AG04450 (cell line): ENCODE measurements at regions of chr3 and their contacts with region 1.

Region 1: DNA sequence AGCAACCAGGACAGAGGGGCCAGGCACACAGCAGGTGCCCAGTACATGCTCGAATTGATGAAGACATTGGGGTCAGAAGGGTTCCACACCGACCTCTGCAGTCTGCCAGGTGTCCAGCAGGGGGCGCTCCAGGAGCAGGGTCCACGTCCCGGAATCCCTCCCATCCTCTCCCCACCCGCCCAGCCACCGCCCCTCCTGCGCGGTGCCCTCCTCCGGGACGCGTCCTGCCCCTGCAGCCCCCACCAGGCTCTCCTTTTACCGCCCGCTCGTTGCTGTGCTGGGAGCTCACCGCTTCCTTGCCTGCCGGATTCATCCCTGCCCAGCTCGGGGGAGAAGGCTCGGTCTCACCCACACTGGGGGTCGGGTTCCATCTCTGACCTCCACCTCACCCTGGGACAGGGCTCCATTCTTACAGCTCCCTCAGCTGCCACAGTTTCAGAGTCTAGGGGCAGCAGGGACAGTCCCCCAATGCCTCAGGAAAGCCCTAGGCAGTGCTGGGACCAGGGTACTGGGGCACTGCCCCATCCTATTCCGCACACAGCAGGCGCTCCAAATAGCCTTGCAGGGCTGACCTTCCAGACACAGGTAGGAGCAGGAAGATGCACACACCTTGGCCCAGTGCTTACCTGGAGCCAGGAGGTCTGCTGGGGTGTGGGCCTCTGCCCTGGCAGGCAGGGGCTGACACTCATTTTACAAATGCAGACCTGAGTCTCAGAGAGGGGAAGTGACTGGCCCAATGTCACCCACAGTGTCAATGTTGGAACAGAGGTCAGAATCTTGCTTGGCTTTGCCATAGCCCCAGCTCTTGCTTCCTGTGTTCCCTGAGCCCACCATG is 31.0 kb downstream of the GRIP2 start:
- DNase-seq: no peak
- H3K4me3 ChIP-seq: no peak overlapping the region
- H3K27ac ChIP-seq: no peak overlapping the region
- H3K27me3 ChIP-seq: peaks cover 10% of the 10 kb centered on the region
- CTCF ChIP-seq: peak; percentile 84

Region 2: DNA sequence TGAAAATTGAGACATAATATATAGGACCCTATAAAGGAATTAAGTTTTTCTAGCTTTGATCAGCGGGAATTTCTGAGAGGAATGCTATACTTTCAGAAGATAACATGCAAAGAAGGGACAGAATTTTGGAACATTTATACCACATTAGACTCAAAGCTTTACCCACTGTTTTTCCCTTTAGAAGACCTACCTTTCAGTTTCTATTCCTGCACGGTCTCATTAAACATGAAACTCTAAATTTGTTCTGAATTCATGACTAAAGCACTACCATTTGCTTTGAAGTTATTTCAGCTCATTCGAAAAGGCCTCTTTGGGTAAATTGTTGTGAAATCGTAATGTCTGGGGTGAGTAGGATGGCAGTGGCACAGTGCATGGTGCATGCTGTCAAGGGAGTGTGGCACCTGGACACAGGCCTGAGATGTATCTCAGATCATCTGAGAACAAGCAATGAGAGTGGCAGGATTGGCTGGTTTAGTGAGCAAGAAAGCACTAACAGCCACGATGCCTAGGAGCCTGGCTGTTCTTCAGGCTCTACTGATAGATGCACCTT is 427.0 kb before region 1 on chr3:
- CTCF ChIA-PET with region 1: interaction called, 11 read pairs
- POLR2A ChIA-PET with region 1: no interaction called
- DNase-seq: no peak
- H3K4me3 ChIP-seq: no peak overlapping the region
- H3K27ac ChIP-seq: no peak overlapping the region
- H3K27me3 ChIP-seq: no peaks in the 10 kb centered on the region
- CTCF ChIP-seq: no peak

Region 3: DNA sequence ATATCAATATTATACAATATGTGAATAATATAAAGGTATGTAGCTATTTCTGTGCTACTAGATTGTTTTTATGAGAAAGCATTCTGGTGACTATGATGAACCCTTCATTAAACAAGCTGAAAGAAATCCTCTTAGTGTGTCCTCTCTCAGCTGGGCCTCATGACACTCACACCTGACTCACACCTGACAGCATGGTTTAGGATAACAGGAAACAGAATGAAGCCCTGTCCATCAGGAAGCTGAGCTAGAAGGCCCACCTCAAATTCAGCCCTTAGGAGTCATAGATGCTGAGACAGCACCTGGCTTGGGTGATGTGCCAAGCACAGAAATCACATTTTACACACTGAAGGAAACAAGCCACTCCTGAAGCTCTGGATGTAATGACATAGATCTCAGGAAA is 415.3 kb before region 1 on chr3:
- CTCF ChIA-PET with region 1: no interaction called
- POLR2A ChIA-PET with region 1: no interaction called
- DNase-seq: no peak
- H3K4me3 ChIP-seq: no peak overlapping the region
- H3K27ac ChIP-seq: no peak overlapping the region
- H3K27me3 ChIP-seq: peaks cover 8% of the 10 kb centered on the region
- CTCF ChIP-seq: no peak

Region 4: GRCh38 chr3:14261229-14261628 is 247.9 kb before region 1 on chr3:
- CTCF ChIA-PET with region 1: interaction called, 10 read pairs
- POLR2A ChIA-PET with region 1: no interaction called
- DNase-seq: peak; percentile 48
- H3K4me3 ChIP-seq: no peak overlapping the region
- H3K27ac ChIP-seq: no peak overlapping the region
- H3K27me3 ChIP-seq: no peaks in the 10 kb centered on the region
- CTCF ChIP-seq: peak; percentile 99

Region 5: DNA sequence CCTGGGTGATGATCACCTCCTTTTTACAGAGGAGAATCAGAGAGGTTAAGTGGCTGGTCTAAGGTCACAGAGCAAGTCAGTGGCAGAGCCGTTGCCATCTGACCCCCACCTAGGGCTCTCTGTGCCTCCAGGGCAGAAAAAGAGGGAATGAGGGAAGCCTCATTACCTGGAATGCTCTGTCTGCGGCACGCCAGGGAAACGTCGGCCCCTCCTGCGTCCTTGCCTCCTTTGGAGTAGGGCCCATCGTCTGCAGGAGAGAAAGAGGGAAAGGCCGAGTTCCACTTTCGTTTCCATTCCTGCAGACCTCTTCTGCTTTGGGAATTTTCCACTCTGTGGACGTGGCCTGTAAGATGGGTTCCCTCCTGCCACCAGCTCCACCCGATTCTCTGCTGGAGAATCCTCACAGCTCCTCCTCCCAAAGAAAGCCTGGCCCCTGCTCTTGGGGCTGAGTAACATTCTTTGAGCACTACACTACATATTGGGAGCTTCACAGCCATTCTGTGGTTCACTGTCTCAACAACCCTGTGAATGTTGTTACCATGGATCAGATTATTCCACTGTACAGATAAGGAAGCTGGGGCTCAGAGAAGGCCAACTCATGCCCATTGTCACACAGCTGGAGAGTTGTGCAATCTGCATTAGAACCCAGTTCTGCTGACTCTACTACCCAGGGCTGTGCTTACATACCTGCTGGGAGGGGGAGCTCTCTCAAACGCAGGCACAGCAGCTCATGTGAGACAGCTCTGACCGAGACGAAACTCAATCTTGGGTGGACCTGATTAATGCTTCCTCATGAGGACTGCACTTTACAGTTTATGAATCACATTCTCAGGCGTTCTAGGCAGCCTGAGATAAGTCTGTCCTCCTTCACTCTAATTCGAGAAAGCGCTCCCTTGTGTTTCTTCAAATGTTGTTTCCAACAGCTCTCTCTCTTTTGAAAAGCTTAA is 16.8 kb after region 1 on chr3:
- CTCF ChIA-PET with region 1: interaction called, 68 read pairs
- POLR2A ChIA-PET with region 1: no interaction called
- DNase-seq: no peak
- H3K4me3 ChIP-seq: no peak overlapping the region
- H3K27ac ChIP-seq: no peak overlapping the region
- H3K27me3 ChIP-seq: peaks cover 21% of the 10 kb centered on the region
- CTCF ChIP-seq: no peak

Region 6: DNA sequence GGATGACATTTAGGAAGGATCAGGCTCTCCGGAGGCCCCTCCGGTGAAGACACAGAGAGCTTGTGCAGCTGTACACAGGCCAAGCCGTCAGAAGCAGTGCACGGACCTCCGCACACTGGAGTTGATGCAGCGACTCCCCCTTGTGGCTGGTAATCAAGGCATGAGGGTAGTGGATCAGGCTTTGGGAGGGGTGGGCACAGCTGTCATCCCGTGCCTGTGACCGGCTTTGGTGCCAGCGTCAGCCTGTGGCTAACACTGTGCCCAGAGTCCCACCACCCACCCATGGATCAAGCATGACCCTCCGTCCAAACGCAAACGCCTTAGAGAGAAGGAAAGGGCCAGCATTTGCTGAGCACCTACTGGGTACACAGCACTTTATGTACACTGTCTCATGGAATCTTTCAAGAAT is 39.1 kb after region 1 on chr3:
- CTCF ChIA-PET with region 1: interaction called, 33 read pairs
- POLR2A ChIA-PET with region 1: no interaction called
- DNase-seq: peak; percentile 33
- H3K4me3 ChIP-seq: no peak overlapping the region
- H3K27ac ChIP-seq: no peak overlapping the region
- H3K27me3 ChIP-seq: peaks cover 11% of the 10 kb centered on the region
- CTCF ChIP-seq: peak; percentile 80

Region 7: GRCh38 chr3:14626881-14627411 is 117.8 kb after region 1 on chr3:
- CTCF ChIA-PET with region 1: no interaction called
- POLR2A ChIA-PET with region 1: no interaction called
- DNase-seq: peak; percentile 37
- H3K4me3 ChIP-seq: no peak overlapping the region
- H3K27ac ChIP-seq: peak overlapping the region; percentile 47
- H3K27me3 ChIP-seq: no peaks in the 10 kb centered on the region
- CTCF ChIP-seq: no peak

Region 8: DNA sequence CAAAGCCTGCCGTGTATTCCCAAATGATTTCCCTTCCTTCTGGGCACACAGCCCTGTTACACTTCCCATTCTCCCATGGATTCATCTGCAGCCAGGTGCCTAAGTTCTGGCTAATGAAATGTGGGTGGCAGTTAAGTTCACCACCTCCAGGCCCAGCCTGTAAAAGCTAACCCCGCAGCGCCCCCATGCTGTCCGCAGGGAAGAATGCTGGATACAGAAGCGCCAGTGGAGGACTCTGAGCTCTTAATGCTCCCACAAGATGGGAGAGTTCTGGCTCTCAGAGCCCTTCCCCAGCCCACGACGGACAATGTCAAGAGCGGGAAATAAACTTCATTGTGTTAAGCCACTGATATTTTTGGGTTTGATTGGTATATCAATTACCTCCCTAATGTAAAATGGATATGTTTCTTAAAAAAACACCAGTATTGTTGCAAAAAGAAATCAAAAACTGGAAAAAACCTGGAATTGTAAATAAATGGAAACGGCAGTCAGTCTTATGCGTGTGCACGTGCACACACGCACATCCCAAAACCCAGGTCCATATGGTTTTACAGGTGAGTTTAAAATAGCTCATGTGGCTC is 271.8 kb after region 1 on chr3:
- CTCF ChIA-PET with region 1: interaction called, 13 read pairs
- POLR2A ChIA-PET with region 1: no interaction called
- DNase-seq: peak; percentile 3
- H3K4me3 ChIP-seq: no peak overlapping the region
- H3K27ac ChIP-seq: no peak overlapping the region
- H3K27me3 ChIP-seq: peaks cover 2% of the 10 kb centered on the region
- CTCF ChIP-seq: peak; percentile 56

Region 9: DNA sequence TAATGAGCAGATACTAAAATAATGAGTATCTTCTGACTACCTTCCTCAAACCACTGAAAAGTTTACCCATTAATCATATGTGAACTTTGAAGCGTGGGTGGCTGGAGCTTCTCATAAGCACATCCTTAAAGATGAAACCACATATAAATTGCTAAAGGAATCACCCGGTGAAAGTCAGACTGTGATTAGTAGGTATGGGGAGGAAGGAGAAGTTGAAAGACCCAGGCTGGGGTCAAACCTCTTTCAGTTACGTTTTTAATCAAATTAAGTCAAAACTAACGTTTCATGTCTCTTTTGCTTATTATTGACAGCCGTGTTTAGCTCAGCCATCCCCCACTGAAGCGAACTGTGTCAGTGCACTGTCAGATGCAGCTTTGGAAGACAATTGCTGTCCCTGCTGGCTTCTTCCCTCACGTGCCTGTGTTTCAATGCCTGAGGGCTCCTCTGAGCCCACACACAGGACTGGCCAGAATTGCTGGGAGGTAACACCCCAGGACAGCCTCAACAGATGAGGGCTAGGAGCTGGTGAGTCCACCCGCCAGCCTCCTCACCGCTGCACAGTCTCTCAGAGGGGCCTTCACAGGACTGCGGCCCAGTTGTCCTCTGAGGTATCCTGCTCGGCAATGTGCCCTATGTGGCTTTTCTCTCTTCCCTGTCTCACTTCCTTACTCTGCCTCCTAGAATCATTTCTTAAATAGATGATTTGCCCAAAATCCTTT is 852.5 kb after region 1 on chr3:
- CTCF ChIA-PET with region 1: interaction called, 10 read pairs
- POLR2A ChIA-PET with region 1: no interaction called
- DNase-seq: no peak
- H3K4me3 ChIP-seq: no peak overlapping the region
- H3K27ac ChIP-seq: no peak overlapping the region
- H3K27me3 ChIP-seq: peaks cover under 1% of the 10 kb centered on the region
- CTCF ChIP-seq: no peak